ENCODE measurements at regions of chr6 and their contacts with region 1.

Region 1: GRCh38 chr6:108788416-108788815 is 59.8 kb upstream of the ARMC2 start:
- DNase-seq: no peak
- H3K4me3 Mint-ChIP-seq: no peak overlapping the region
- H3K27ac Mint-ChIP-seq: no peak overlapping the region
- H3K4me1 Mint-ChIP-seq: no peaks in the 10 kb centered on the region
- H3K27me3 Mint-ChIP-seq: peaks cover 33% of the 10 kb centered on the region

Region 2: DNA sequence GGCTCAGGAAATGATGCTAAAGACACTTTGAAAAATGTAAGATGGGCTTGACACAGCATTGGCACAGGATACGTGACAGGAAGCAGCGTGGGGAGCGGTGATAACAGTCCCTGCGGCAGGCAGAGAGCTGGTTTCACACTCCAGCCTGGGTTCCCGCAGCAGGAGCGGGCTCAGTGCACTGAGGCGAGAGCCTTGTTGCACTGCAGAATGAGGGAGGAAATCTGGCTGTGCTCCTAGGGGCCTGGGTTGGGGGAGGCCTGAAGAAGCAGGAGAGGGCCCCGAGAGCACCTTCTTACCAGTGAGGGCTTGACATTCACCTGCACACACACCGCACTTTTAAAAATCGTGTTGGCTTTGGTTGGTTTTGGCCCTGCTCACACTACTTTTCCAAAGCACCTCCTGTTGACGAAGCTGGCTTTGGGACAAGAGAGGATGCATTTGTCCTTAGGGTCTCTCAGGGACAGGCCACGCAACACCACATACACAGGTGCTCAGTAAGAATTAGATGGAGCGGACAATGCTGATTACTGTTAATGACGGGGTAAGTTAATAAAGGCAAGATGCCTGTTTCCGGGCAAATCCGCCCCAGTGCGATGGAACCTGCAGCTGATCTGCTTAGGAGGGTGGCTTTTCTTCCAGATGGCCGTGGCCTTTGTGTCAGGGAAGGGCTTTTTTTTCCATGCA is 10.4 kb after region 1 on chr6:
- CTCF ChIA-PET with region 1: interaction called, 11 read pairs
- POLR2A ChIA-PET with region 1: no interaction called
- DNase-seq: peak; percentile 73
- H3K4me3 Mint-ChIP-seq: peak overlapping the region; percentile 40
- H3K27ac Mint-ChIP-seq: peak overlapping the region; percentile 91
- H3K4me1 Mint-ChIP-seq: peaks cover 41% of the 10 kb centered on the region
- H3K27me3 Mint-ChIP-seq: no peaks in the 10 kb centered on the region

Region 3: GRCh38 chr6:108809211-108809610 is 20.8 kb after region 1 on chr6:
- CTCF ChIA-PET with region 1: no interaction called
- POLR2A ChIA-PET with region 1: no interaction called
- DNase-seq: no peak
- H3K4me3 Mint-ChIP-seq: no peak overlapping the region
- H3K27ac Mint-ChIP-seq: no peak overlapping the region
- H3K4me1 Mint-ChIP-seq: peaks cover 10% of the 10 kb centered on the region
- H3K27me3 Mint-ChIP-seq: peaks cover 4% of the 10 kb centered on the region

Measured in activated CD4-positive, alpha-beta T cell treated with anti-CD3 and anti-CD28 coated beads, Interleukin-2, amount 10 ng/mL, durations not matched to agents 7 days and 5 days (primary cell).